ENCODE measurements at regions of chr16 and their contacts with region 1.

Region 1: DNA sequence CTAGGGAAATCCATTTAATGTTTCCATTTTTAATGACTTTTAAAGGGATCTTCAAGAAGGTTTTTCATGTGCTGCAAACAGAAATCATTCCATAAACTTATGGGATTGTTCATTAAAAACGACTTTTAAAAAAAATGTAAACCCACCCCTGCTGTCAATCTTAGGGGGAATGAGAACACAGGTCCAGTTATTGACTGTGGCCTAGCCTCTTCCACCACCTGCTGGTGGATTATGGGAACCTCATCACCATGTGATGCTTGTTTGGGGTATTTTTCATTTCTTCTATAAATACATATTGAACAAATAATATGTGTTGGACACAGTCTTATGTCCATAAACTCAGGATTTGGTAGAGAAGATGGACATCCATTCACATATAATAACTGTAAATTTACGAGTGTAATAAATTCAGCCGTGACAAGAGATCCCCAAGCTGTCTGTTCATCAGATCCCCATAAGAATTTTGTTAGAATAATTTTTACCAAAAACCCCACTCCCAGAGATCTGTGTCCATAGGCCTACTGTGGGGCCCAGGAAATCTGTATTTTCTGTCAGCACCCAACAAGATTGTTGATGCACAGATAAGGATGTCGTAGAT is 42.0 kb upstream of the TMC5 start:
- DNase-seq: no peak
- H3K4me3 ChIP-seq: no peak overlapping the region
- H3K27ac ChIP-seq: no peak overlapping the region
- H3K4me1 ChIP-seq: no peaks in the 10 kb centered on the region
- H3K27me3 ChIP-seq: no peaks in the 10 kb centered on the region
- CTCF ChIP-seq: peak; percentile 50 to 92 (median 85)
- EP300 ChIP-seq: no peak
- POLR2A ChIP-seq: no peak

Region 2: DNA sequence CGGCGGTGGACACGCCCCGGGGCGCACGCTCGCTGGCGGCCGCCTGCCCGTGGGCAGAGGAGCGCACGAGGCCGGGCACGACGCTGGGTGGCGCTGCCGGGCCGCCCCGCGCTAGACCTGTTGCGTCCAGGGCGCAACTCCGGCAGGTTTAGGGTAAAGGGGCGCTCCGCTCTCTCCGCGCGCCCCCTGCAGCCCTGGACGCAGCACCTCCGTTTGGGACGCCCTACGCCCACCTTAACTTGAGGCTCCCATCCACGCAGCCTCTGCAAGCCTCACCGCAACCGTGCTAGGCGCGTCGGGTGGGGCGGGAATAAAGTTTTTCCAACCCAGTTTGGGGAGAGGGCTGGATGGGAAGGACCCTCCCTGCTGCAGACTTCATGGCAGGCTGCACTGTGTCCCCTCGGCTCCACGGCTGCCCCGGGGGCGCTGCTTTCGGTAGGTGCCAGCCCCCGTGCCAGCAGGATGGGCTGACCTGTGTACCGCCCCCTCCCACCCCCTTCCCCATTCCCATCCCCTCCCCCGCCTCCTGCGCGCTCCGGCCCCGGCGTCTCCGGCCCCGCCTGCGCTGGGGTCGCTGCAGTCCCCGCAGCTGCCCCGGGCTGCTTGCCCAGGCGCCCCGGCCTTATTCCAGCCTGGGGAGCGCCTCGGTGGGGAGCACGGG is 207.8 kb before region 1 on chr16 and contains the start of gene SYT17:
- intact Hi-C with region 1: loop called (anchors 2 kb)
- DNase-seq: no peak
- H3K4me3 ChIP-seq: peak within 1 kb of the TSS; percentile 26 to 53 (median 46)
- H3K27ac ChIP-seq: peak within 1 kb of the TSS in 1 of 4 donors; percentile 65
- H3K4me1 ChIP-seq: peaks cover 0 to 18% (median 17%) of the 10 kb centered on the region in 4 donors
- H3K27me3 ChIP-seq: peaks cover 18 to 48% (median 29%) of the 10 kb centered on the region in 3 donors
- CTCF ChIP-seq: peak in 2 of 4 experiments; percentile 31 to 43
- EP300 ChIP-seq: no peak
- POLR2A ChIP-seq: no peak
- total RNA-seq, gene SYT17: 0.68 to 2.5 (median 1.8) TPM

Measured in sigmoid colon (tissue), 7 donors.